Prostate gland (tissue), 2 donors: ENCODE measurements at regions of chr1 and their contacts with region 1.

Region 1: DNA sequence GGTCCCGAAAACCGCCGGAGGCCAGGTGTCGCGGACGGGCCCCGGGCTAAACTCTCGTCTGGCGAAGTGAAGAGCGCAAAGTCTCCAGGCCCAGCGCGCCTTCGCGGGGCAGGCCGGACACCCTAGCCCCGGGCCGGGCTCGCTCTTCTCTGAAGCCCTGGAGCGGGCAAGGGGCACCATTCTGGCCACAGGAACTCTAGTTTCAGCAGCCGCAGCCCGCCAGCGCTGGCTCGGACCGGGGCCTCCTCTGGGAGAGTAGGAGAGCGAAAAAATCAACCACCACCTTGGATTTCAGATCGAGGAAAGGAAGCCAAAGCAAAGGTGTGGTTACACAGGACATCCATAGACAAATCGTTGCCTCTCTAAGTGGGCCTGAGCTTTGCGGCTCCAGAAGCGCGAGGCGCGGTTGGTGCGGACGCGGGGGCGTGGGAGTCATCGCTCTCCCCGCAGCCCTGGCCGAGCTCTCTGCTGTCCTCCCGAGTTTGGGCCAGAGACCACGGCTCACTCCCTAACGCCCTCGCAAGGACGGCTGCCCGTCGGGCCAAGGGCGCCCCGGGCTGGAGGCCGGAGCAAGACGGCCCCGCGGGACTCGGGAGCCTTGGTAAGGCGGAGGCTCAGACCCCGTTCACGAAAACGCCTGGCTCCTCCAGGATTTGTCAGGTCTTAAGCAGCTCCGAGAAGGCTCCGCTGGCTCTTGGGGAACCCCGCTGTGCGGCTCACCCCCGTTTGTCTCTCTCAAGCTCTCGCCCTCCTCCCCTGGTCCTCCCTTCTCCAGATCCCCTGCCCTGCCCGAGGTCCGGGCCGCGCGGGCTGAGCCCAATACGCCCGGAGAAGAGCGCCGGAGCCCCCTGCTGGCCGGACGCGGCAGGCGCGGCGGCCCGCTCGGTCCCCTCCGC is 132.9 kb upstream of the DPYD start:
- DNase-seq: peak; percentile 17
- H3K4me3 ChIP-seq: peak overlapping the region; percentile 26 to 33
- H3K27ac ChIP-seq: no peak overlapping the region
- H3K4me1 ChIP-seq: no peaks in the 10 kb centered on the region
- H3K27me3 ChIP-seq: peaks cover 8% of the 10 kb centered on the region
- CTCF ChIP-seq: peak; percentile 69 to 77 (median 74)
- POLR2A ChIP-seq: no peak

Region 2: DNA sequence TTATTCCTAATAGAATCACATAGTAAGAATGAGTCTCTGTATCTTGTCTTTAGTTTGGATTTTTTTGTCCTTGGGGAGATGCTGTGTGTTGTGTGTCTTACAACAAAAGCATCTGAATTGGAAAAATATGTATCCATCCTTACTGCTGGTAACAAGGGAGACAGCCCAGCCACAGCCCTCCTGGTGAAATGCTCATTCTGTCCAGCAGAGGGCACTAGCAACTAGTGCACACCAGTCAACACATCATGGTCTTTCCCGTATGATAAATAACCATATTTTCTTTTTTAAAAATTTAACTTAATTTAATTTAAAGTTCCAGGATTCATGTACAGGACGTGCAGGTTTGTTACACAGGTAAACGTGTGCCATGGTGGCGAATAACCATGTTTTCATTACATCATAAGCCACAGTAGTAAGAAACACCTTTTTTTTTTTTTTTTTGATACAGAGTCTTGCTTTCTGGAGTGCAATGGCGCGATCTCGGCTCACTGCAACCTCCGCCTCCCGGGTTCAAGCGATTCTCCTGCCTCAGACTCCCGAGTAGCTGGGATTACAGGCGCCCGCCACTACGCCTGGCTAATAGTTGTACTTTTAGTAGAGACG is 1087.1 kb before region 1 on chr1:
- intact Hi-C with region 1: loop called (anchors 2 kb)
- DNase-seq: peak; percentile 68
- H3K4me3 ChIP-seq: no peak overlapping the region
- H3K27ac ChIP-seq: no peak overlapping the region
- H3K4me1 ChIP-seq: no peaks in the 10 kb centered on the region
- H3K27me3 ChIP-seq: no peaks in the 10 kb centered on the region
- CTCF ChIP-seq: peak; percentile 75 to 92 (median 76)
- POLR2A ChIP-seq: no peak